Colonic mucosa (tissue), 4 donors: ENCODE measurements at regions of chr5 and their contacts with region 1.

Region 1: DNA sequence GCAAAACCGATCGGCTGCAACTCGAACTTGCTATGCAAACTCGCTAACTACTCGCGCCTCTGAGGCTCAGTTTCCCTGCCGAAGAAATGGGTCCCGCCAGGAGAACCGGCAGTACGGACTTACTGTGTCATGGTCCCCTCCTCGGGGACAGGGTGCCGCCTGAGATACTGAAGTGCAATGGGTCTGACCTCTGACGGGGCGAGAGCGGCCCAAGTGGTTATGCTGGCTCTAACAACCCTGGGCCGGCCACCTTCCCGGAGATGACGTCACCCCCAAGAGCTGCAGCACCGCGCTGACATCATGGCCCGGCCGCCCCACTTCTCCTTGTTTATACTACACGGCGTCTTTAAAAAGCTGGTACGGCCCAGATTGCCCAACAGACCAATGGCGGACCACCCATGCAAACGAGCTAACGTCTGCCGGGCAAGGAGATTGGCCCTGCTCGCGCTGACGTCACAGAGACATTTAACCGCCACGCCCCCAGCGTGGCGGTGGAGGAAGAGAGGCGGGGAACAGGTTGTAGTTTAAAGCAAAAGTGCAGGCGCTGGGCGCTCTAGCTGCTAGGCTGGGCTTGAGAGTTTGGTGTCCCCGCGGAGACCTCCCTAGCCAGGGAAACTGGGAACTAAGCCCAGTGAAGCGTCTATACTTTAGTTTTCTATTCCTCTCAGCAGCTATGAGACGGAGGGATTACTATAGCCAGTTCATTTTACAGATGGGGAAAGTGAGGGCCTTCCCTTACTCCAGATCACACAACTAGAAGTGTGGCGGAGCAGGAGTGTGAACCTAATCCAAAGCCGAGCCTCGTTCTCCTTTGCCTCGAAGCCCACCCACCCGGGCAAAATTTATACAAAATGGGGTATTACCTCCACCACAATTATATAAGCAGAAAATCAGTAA is 654 bp upstream of the RNF44 start:
- DNase-seq: peak; percentile 98
- H3K4me3 ChIP-seq: peak overlapping the region; percentile 81
- H3K27ac ChIP-seq: peak overlapping the region; percentile 97
- H3K4me1 ChIP-seq: peaks cover 30% of the 10 kb centered on the region
- H3K27me3 ChIP-seq: no peaks in the 10 kb centered on the region
- CTCF ChIP-seq: no peak

Region 2: DNA sequence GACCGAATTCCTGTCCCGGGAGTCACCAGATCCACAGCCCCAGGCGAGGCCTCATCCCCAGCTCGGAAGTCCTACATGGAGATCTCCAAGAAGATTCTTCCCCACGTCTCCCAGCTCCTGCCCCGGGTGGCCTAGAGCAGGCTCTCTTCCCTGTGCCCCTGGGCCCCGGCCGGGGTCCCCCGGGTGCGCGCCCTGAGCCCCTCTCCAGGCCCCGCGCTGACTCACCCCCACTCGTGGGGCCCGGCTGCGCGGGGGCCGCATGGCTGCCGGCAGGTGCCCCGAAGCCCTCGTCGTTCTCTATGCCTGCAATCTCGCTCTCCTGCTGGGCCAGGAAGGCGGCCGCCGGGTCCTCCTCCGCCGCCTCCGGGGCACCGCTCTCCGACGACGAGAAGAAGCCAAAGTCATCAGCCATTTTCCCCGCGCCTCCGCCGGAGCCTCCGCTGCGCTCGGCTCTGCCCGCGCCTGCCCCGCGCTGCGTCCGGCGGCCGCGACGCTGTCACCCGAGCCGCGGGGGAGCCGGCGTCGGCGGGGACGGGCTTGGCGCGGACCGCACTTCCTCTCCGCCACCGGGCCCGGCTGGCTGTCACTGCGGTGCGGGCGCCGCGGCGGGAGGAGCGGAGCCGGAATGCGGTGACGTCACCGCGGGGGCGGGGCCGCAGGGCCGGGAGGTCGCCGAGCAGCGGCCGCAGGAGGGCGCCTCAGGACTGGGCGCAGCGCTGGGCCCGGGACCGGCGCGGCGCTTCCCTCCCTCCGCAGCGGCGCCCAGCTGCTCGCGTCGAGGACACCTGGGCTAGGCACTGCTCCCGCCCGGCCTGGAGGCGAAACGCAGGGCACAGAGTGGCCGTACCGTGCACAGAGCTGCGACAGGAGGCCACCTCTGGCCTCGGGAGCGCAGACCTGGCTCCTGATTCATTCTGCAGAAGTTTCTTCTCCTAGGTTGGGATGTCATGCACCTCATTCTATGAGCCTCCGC is 121.6 kb before region 1 on chr5 and contains the start of gene CLTB:
- intact Hi-C with region 1: loop called (anchors 10 kb)
- DNase-seq: peak; percentile 91
- H3K4me3 ChIP-seq: peak within 1 kb of the TSS; percentile 97
- H3K27ac ChIP-seq: peak within 1 kb of the TSS; percentile 91
- H3K4me1 ChIP-seq: no peaks in the 10 kb centered on the region
- H3K27me3 ChIP-seq: no peaks in the 10 kb centered on the region
- CTCF ChIP-seq: peak; percentile 51
- total RNA-seq, gene CLTB: 181 to 263 TPM

Region 3: GRCh38 chr5:176955895-176956294 is 418.0 kb after region 1 on chr5:
- intact Hi-C with region 1: no loop called
- DNase-seq: no peak
- H3K4me3 ChIP-seq: no peak overlapping the region
- H3K27ac ChIP-seq: no peak overlapping the region
- H3K4me1 ChIP-seq: no peaks in the 10 kb centered on the region
- H3K27me3 ChIP-seq: no peaks in the 10 kb centered on the region
- CTCF ChIP-seq: no peak